ENCODE measurements at regions of chr12 and their contacts with region 1.

Region 1: DNA sequence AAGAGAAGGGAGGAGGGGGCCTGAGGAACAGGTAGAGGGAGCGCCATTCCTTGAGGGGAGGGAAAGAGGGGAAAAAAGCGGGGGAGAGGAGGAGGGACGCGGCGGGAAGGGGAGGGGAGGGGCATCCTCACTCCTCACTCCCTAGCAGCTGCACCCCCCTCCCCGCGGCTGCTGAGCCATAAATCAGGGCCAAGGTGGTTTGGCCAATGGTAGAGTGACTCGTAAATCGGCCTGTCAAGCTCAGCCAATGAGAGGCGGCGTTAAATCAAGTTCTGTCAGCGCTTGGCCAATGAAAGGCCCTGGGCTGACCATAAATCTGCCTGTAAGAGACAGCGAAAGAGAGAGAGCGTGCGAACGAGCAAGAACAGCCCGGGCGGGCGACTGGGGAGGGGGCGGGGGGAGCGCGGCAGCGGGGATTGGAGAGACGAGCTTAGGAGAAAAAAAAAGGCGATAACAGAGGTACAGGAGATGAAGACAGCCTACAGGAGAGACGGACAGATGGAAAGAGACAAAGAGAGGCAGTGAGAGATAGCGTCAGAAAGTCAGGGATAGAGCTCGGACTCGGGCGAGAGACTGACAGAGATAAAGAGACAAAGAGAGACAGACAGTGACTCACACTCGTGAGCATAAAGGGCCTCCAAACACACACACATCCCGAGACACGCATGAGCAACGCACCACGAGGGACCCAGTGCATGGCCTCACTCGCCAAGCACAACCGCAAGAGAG is 5.1 kb downstream of the GPR84 start:
- DNase-seq: peak; percentile 99
- ATAC-seq: peak; percentile 89
- H3K4me3 ChIP-seq: peak overlapping the region; percentile 49 to 68
- H3K27ac ChIP-seq: peak overlapping the region; percentile 61
- H3K4me1 ChIP-seq: peaks cover 26 to 36% of the 10 kb centered on the region in 2 experiments
- H3K27me3 ChIP-seq: no peaks in the 10 kb centered on the region
- CTCF ChIP-seq: no peak
- POLR2A ChIP-seq: no peak
- RAD21 ChIP-seq: no peak

Region 2: DNA sequence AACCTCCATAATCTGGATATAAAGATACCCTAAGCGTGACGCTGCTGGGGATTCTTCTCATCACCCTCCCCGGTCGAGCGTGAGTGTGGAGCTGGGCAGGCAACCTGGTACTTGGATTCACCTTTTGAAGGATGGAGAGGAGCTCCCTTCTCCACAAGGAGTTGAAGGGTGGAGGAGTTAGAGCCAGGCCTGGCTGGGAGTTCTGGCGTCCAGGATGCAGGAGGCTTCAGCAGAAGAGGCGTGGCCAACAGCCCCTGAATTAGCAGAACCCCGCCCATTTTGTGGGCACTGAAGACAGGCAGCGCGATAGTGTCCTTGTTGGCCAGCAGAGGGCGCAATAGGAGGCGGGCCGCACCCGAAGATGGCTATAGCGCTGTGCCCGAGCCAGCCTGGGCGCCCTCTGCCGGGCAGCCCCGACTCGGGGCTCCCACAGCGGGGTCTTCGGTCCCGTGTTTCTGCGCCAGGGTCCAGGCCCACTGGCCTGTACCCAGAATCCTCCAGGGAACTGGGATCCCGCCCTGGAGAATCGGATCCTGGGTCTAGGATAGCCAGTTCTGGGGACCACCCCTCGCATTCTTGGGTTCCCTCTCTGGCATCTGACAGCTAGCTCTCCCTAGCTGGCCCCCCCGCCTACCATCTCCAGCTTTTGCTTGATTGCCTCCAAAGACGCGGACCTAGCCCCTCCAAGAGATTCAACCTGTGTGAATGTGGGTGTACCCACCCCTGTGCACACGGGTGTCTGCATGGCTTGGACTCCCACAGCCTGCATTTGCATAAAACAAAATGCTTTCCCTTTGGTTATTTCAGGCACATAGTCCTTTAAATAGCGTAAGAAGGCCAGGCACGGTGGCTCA is 144.4 kb before region 1 on chr12:
- CTCF ChIA-PET with region 1: interaction called, 11 read pairs
- POLR2A ChIA-PET with region 1: no interaction called
- RAD21 ChIA-PET with region 1: interaction called in 1 of 2 experiments, 4 read pairs
- intact Hi-C with region 1: no loop called
- DNase-seq: peak; percentile 85
- ATAC-seq: peak; percentile 93
- H3K4me3 ChIP-seq: peak overlapping the region; percentile 15 to 30; a peak in 3 of 4 replicates
- H3K27ac ChIP-seq: no peak overlapping the region
- H3K4me1 ChIP-seq: peaks cover 3 to 26% of the 10 kb centered on the region in 2 experiments
- H3K27me3 ChIP-seq: no peaks in the 10 kb centered on the region
- CTCF ChIP-seq: peak; percentile 98 to 100 (median 99)
- POLR2A ChIP-seq: no peak
- RAD21 ChIP-seq: peak; percentile 70

Region 3: DNA sequence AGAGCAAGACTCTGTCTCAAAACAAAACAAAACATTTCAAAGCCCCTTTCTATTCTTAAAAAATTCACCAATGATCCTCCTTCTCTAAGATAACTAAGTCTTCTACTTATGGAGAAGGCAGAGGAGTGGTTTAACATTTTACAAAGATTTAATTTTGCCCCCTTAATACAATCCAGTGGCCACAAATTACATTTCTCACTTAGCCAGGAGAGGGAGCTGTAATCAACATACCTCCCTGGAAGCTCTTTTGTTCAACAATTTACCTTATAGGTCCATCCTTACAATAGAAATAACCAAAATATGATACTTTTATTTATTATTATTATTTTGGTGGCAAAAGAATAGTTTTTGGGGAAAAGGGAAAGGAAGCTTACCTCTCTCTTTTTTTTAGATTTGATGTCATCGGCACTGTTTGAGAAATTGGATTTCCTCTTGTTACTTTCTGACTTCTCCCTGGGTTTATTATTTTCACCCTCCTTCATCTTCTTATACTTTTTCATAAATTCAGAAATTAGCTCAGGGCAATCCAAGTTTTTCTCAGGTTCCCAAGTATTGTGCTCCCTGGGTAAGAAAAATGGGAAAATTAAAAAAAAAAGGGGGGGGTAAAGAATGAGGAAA is 107.4 kb before region 1 on chr12:
- CTCF ChIA-PET with region 1: interaction called, 7 read pairs
- POLR2A ChIA-PET with region 1: interaction called, 3 read pairs
- RAD21 ChIA-PET with region 1: no interaction called
- intact Hi-C with region 1: loop called (anchors 1 kb)
- DNase-seq: peak; percentile 37
- ATAC-seq: peak; percentile 64
- H3K4me3 ChIP-seq: no peak overlapping the region
- H3K27ac ChIP-seq: no peak overlapping the region
- H3K4me1 ChIP-seq: peaks cover 12 to 13% of the 10 kb centered on the region in 2 experiments
- H3K27me3 ChIP-seq: no peaks in the 10 kb centered on the region
- CTCF ChIP-seq: peak; percentile 64 to 75 (median 64); a peak in 5 of 6 replicates
- POLR2A ChIP-seq: no peak
- RAD21 ChIP-seq: peak; percentile 66

Region 4: GRCh38 chr12:54294152-54294952 is 64.8 kb before region 1 on chr12:
- CTCF ChIA-PET with region 1: interaction called, 8 read pairs
- POLR2A ChIA-PET with region 1: interaction called, 4 read pairs
- RAD21 ChIA-PET with region 1: interaction called in 1 of 2 experiments, 5 read pairs
- intact Hi-C with region 1: loop called (anchors 1 kb)
- DNase-seq: no peak
- ATAC-seq: peak; percentile 79
- H3K4me3 ChIP-seq: no peak overlapping the region
- H3K27ac ChIP-seq: no peak overlapping the region
- H3K4me1 ChIP-seq: no peaks in the 10 kb centered on the region
- H3K27me3 ChIP-seq: peaks cover 4% of the 10 kb centered on the region; the same call in 1 of the 2 replicates
- CTCF ChIP-seq: peak; percentile 90 to 96 (median 91); a peak in 5 of 6 replicates
- POLR2A ChIP-seq: no peak
- RAD21 ChIP-seq: peak; percentile 90

Region 5: GRCh38 chr12:54337280-54337842 is 21.8 kb before region 1 on chr12:
- CTCF ChIA-PET with region 1: interaction called, 27 read pairs
- POLR2A ChIA-PET with region 1: interaction called, 9 read pairs
- RAD21 ChIA-PET with region 1: no interaction called
- intact Hi-C with region 1: no loop called
- DNase-seq: no peak
- ATAC-seq: no peak
- H3K4me3 ChIP-seq: no peak overlapping the region
- H3K27ac ChIP-seq: no peak overlapping the region
- H3K4me1 ChIP-seq: peaks cover 4 to 9% of the 10 kb centered on the region in 2 experiments; a peak in 3 of 4 replicates
- H3K27me3 ChIP-seq: no peaks in the 10 kb centered on the region
- CTCF ChIP-seq: no peak
- POLR2A ChIP-seq: no peak
- RAD21 ChIP-seq: no peak

Region 6: GRCh38 chr12:54560374-54560858 is 201.2 kb after region 1 on chr12:
- CTCF ChIA-PET with region 1: no interaction called
- POLR2A ChIA-PET with region 1: no interaction called
- RAD21 ChIA-PET with region 1: no interaction called
- intact Hi-C with region 1: no loop called
- DNase-seq: peak; percentile 21
- ATAC-seq: peak; percentile 100
- H3K4me3 ChIP-seq: no peak overlapping the region
- H3K27ac ChIP-seq: no peak overlapping the region
- H3K4me1 ChIP-seq: peaks cover 0 to 8% of the 10 kb centered on the region in 2 experiments; a peak in 1 of 4 replicates
- H3K27me3 ChIP-seq: peaks cover 44% of the 10 kb centered on the region
- CTCF ChIP-seq: no peak
- POLR2A ChIP-seq: peak; percentile 44
- RAD21 ChIP-seq: no peak

Measured in HCT116 (cell line).